HEK293 (cell line): ENCODE measurements at regions of chr5 and their contacts with region 1.

Region 1: DNA sequence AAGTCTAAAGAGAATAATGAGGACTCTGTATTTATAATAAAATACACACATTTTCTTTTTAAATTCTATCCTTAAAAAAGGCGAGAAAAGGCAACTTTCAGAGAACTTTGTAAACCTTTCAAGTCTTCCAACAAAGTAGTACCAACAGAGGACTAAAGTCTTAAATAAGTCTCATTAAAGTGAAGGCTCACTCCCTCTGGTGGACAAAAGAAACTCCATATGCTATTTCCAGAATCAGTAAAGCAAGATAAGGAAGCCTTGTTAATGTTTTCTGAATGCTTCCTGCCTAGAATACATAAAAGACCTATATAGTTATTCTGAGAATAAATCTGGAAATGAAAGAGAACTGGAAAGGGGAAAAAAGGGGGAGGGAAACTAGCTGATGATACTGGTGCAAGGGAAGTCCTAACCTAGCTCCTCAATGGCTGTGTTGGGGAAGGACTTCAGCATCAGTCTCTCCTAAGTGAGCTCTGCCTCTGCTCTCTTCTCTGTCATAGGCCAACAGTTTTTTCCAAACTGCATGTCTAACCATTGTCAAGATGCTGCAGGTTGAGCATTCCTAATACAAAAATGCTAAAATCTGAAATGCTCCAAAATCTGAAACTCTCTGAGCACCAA is 7.2 kb downstream of the HMGCS1 start:
- H3K4me3 ChIP-seq: no peak overlapping the region
- H3K27ac ChIP-seq: no peak overlapping the region
- H3K4me1 ChIP-seq: peaks cover 27% of the 10 kb centered on the region
- CTCF ChIP-seq: peak; percentile 56; the same call in 1 of the 2 replicates

Region 2: DNA sequence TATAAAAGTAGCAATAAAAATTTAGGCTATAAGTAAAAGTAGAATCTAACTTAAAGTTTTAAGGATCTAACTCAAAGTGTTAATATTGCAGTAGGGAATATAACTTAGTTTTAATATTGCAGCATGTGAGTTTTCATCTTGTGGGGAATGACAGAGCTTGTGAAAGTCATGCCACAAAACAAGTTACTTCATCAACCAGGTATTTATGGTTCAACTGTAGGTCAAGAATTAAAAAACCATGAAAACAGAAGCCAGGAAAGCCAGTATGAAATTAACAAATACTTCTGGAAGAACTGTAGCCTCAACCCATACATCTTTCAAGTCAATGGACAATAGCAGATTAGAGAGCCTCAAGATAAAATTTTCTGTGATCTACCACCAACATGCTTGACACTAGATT is 11.8 kb before region 1 on chr5:
- CTCF ChIA-PET with region 1: interaction called, 14 read pairs
- POLR2A ChIA-PET with region 1: no interaction called
- H3K4me3 ChIP-seq: no peak overlapping the region
- H3K27ac ChIP-seq: no peak overlapping the region
- H3K4me1 ChIP-seq: no peaks in the 10 kb centered on the region
- CTCF ChIP-seq: no peak